Activated naive CD4-positive, alpha-beta T cell treated with anti-CD3 and anti-CD28 coated beads for 36 hours (primary cell): ENCODE measurements at regions of chr9 and their contacts with region 1.

Region 1: GRCh38 chr9:133619791-133620190 is 10.6 kb upstream of the FAM163B start:
- DNase-seq: peak; percentile 81
- H3K4me3 Mint-ChIP-seq: no peak overlapping the region
- H3K27ac Mint-ChIP-seq: no peak overlapping the region
- H3K4me1 Mint-ChIP-seq: peaks cover 33% of the 10 kb centered on the region
- H3K27me3 Mint-ChIP-seq: no peaks in the 10 kb centered on the region

Region 2: DNA sequence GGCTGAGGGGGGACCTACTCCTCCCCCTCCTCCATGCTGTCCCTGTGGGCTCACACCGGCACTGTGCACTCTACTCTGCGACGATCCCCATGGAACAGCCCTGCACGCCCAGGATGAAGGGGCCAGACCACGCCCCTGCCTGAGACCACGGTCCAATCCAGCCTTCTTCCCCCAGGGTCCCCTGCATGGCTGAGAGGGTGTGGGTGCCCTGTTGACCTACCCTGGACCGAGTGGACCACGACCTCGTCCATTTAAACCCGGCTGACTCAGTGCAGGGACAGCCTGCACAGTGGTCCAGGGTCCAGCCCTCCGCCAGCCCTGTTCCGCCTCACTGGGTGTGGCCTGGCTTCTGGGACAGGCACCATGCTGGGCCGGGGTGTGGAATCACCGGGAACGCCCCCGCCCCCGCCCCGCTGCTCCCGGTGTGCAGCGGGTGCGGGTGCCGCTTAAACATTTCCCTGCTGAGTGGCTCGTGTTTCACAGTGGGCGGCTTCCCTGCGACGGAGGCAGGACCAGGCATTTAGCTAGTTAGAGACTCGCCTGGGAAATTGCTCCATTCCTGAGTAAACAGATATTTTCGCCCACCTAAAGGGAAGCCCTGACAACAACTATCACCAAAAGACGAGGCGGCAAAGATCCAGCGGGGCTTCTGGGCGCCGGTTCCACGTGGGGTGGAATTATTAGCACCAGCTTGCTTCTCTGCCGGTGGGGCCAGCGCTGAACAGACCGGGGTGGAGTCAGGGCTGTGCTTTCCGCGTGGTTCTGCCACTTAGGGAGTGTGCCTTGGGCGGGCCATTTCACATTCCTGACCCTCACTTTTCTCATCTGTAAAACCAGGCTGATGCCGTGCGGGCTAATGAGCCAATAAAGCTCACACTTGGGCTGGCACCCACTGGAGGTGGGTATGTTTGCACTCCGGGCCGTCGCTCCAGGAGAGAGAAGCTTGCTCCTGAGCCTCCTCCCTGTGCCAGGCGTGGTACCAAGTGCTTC is 38.9 kb after region 1 on chr9:
- CTCF ChIA-PET with region 1: no interaction called
- intact Hi-C with region 1: no loop called
- DNase-seq: peak; percentile 60
- H3K4me3 Mint-ChIP-seq: peak overlapping the region; percentile 45
- H3K27ac Mint-ChIP-seq: no peak overlapping the region
- H3K4me1 Mint-ChIP-seq: peaks cover 41% of the 10 kb centered on the region
- H3K27me3 Mint-ChIP-seq: peaks cover 18% of the 10 kb centered on the region

Region 3: GRCh38 chr9:133677126-133678010 is 57.6 kb after region 1 on chr9:
- CTCF ChIA-PET with region 1: no interaction called
- intact Hi-C with region 1: loop called (anchors 2 kb)
- DNase-seq: peak; percentile 85
- H3K4me3 Mint-ChIP-seq: no peak overlapping the region
- H3K27ac Mint-ChIP-seq: peak overlapping the region; percentile 70
- H3K4me1 Mint-ChIP-seq: peaks cover 44% of the 10 kb centered on the region
- H3K27me3 Mint-ChIP-seq: no peaks in the 10 kb centered on the region

Region 4: DNA sequence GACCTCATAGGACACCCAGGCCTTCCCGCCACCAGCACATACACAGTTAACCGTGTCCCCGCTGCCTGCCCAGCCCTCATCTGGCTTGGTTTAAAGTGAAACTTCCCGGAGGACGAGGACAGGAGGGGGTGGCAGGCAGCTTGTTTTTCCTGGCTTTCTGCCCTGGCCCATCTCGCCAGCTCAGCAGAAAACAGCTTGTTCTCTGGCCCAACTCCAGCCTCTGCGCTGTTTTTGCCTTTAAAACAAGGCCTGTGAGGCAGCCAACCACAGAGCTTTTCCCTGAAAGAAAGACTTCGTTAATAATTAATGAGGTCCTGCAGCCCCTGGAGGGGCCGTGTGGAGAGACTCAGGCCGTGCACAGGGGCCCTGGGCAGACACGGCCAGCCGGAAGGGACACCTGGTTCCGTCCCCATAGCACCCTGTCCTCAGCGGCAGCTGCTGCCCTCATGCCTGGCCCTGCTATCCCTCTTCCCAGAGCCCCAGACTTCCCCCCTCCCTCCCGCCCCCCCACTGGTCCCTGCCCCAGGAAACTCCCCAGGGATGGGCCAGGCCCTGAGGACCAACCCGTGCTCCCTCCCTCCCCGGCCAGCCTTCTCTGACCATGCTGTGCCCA is 815.2 kb after region 1 on chr9:
- CTCF ChIA-PET with region 1: no interaction called
- intact Hi-C with region 1: no loop called
- DNase-seq: no peak
- H3K4me3 Mint-ChIP-seq: no peak overlapping the region
- H3K27ac Mint-ChIP-seq: no peak overlapping the region
- H3K4me1 Mint-ChIP-seq: no peaks in the 10 kb centered on the region
- H3K27me3 Mint-ChIP-seq: no peaks in the 10 kb centered on the region